ENCODE measurements at regions of chr16 and their contacts with region 1.

Region 1: DNA sequence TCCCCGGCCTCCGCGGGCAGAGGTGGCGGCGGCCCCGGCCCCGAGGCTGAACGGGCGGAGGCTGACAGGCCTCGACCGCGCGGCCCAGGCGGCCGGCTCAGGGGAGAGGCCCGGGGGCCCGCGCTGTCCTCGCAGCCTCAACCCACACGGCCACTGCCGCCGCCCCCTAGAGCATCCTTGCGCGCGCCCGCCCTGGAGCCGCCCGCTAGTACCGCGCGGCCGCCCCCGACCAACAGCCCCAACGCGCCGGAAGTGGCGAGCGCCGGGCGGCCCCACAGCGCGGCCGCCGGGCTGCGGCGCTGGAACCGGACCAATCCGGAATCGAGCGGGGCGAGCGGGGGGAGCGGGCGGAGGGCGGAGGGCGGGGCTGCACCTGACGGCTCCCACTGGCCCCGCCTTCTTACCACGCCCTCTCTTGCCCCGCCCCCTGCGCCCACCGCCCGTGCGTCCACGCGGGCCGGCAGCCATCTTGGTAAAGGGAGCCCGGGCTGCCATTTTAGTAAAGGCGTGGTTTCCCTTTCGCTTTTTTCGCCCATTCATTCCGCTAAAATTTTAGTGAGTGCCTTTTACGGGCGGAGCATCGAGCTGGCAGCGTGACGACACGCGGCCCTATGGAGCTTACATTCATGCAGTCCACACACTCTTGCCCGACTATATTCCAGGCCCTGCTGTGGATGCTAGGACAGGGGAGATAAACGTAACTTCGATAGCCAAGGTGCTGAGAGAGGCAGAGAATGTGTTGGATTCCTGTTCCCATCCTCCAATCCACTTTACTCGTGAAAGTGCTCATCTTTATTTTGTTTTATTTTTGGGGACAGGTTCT is at the start of gene XPO6:
- DNase-seq: peak; percentile 95 to 100 (median 98)
- ATAC-seq: peak; percentile 97
- H3K4me3 ChIP-seq: peak within 1 kb of the TSS; percentile 72
- H3K4me3 Mint-ChIP-seq: peak within 1 kb of the TSS; percentile 65 to 98 (median 93)
- H3K27ac ChIP-seq: peak within 1 kb of the TSS; percentile 85
- H3K27ac Mint-ChIP-seq: peak within 1 kb of the TSS; percentile 80 to 98 (median 94)
- H3K4me1 ChIP-seq: peaks cover 19 to 21% of the 10 kb centered on the region in 2 donors
- H3K4me1 Mint-ChIP-seq: peaks cover 8 to 39% (median 32%) of the 10 kb centered on the region in 7 donors
- H3K27me3 ChIP-seq: no peaks in the 10 kb centered on the region
- H3K27me3 Mint-ChIP-seq: no peaks in the 10 kb centered on the region
- total RNA-seq, gene XPO6: 232 to 437 (median 385) TPM

Region 2: GRCh38 chr16:27520982-27521673 is 690.8 kb before region 1 on chr16:
- CTCF ChIA-PET with region 1: no interaction called
- POLR2A ChIA-PET with region 1: no interaction called
- intact Hi-C with region 1: no loop called
- DNase-seq: no peak
- ATAC-seq: no peak
- H3K4me3 ChIP-seq: no peak overlapping the region
- H3K4me3 Mint-ChIP-seq: no peak overlapping the region
- H3K27ac ChIP-seq: no peak overlapping the region
- H3K27ac Mint-ChIP-seq: peak overlapping the region in 1 of 9 donors; percentile 77
- H3K4me1 ChIP-seq: no peaks in the 10 kb centered on the region
- H3K4me1 Mint-ChIP-seq: peaks cover 0 to 4% (median 0%) of the 10 kb centered on the region in 7 donors
- H3K27me3 ChIP-seq: no peaks in the 10 kb centered on the region
- H3K27me3 Mint-ChIP-seq: no peaks in the 10 kb centered on the region

Region 3: GRCh38 chr16:28131743-28132393 is 80.1 kb before region 1 on chr16:
- CTCF ChIA-PET with region 1: interaction called, 168 read pairs
- POLR2A ChIA-PET with region 1: interaction called, 45 read pairs
- intact Hi-C with region 1: loop called in 1 of 2 experiments (anchors 1 kb)
- DNase-seq: no peak
- ATAC-seq: no peak
- H3K4me3 ChIP-seq: no peak overlapping the region
- H3K4me3 Mint-ChIP-seq: no peak overlapping the region
- H3K27ac ChIP-seq: no peak overlapping the region
- H3K27ac Mint-ChIP-seq: peak overlapping the region in 5 of 9 donors; percentile 31 to 86 (median 68)
- H3K4me1 ChIP-seq: peaks cover 6 to 13% of the 10 kb centered on the region in 2 donors
- H3K4me1 Mint-ChIP-seq: peaks cover 16 to 49% (median 36%) of the 10 kb centered on the region in 7 donors
- H3K27me3 ChIP-seq: no peaks in the 10 kb centered on the region
- H3K27me3 Mint-ChIP-seq: no peaks in the 10 kb centered on the region

Region 4: DNA sequence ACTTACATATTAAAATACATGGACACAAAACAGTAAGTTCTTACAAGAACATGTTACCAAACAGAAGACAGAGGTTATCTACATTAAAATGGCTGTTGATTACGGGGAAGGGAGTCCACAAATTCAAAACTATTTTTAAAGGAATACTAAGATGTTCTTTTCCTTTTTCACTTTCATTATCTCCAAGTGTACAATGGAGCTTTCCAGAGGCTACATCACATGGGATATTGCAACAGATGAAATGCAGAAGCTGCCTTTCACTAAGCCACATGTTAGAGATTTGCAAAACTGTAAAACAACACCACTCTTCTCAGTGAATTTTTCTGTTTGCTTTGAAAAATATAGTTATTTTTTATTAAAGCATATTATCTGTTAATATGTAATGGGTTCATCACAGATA is 53.8 kb before region 1 on chr16:
- CTCF ChIA-PET with region 1: interaction called, 10 read pairs
- POLR2A ChIA-PET with region 1: interaction called, 13 read pairs
- intact Hi-C with region 1: no loop called
- DNase-seq: no peak
- ATAC-seq: peak; percentile 57
- H3K4me3 ChIP-seq: no peak overlapping the region
- H3K4me3 Mint-ChIP-seq: peak overlapping the region in 2 of 10 donors; percentile 27 to 48
- H3K27ac ChIP-seq: no peak overlapping the region
- H3K27ac Mint-ChIP-seq: peak overlapping the region in 8 of 9 donors; percentile 56 to 88 (median 65)
- H3K4me1 ChIP-seq: peaks cover 0 to 41% of the 10 kb centered on the region in 2 donors
- H3K4me1 Mint-ChIP-seq: peaks cover 54 to 94% (median 83%) of the 10 kb centered on the region in 7 donors
- H3K27me3 ChIP-seq: no peaks in the 10 kb centered on the region
- H3K27me3 Mint-ChIP-seq: no peaks in the 10 kb centered on the region

Region 5: DNA sequence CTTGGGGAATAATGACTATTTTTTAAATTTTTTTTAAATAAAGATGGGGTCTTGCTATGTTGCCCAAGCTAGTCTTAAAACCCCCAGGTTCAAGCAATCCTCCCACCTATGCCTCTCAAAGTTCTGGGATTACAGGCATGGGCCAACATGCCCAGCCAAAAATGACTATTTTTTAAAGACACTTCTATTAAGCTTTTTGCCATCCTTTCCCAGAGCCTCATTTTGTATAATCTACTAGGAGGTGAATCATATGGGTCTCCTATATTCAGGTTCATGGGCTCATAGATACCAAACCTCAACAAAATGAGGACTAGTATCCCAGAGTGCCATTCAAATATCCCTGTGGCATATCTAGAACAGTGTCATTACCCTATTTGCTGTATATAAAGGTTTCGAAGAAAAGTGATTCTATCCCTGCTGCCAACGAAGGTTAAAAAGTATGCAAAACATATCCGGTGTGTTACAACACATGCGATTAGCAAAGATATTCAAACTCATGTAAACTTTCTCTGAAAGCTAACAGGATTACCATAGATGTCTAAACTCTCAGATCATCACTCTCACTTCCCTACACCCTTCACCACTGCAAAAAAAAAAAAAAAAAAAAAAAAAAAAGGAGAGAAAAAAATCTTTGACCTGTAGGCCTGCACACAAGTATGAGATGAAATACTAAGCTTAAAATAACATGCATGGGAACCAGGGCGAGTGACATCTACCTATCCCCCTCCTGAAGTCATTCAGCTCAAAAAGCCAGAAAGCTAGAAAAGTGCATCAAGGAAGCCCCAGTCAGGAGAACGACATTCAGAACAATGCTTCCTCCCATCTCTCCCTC is 23.6 kb before region 1 on chr16:
- CTCF ChIA-PET with region 1: interaction called, 18 read pairs
- POLR2A ChIA-PET with region 1: interaction called, 53 read pairs
- intact Hi-C with region 1: loop called (anchors 1 kb)
- DNase-seq: no peak
- ATAC-seq: peak; percentile 10
- H3K4me3 ChIP-seq: peak overlapping the region; percentile 30
- H3K4me3 Mint-ChIP-seq: peak overlapping the region; percentile 64 to 81 (median 73)
- H3K27ac ChIP-seq: peak overlapping the region; percentile 66
- H3K27ac Mint-ChIP-seq: peak overlapping the region; percentile 75 to 95 (median 90)
- H3K4me1 ChIP-seq: peaks cover 64 to 79% of the 10 kb centered on the region in 2 donors
- H3K4me1 Mint-ChIP-seq: peaks cover 74 to 97% (median 91%) of the 10 kb centered on the region in 7 donors
- H3K27me3 ChIP-seq: no peaks in the 10 kb centered on the region
- H3K27me3 Mint-ChIP-seq: no peaks in the 10 kb centered on the region

Region 6: GRCh38 chr16:28291873-28292660 is 80.1 kb after region 1 on chr16 and contains the start of gene SBK1:
- CTCF ChIA-PET with region 1: no interaction called
- POLR2A ChIA-PET with region 1: no interaction called
- intact Hi-C with region 1: loop called in 1 of 2 experiments (anchors 1 kb)
- DNase-seq: peak; percentile 75 to 90 (median 87)
- ATAC-seq: peak; percentile 97
- H3K4me3 ChIP-seq: peak within 1 kb of the TSS; percentile 94
- H3K4me3 Mint-ChIP-seq: peak within 1 kb of the TSS; percentile 93 to 97 (median 96)
- H3K27ac ChIP-seq: peak within 1 kb of the TSS; percentile 87
- H3K27ac Mint-ChIP-seq: peak within 1 kb of the TSS; percentile 78 to 96 (median 88)
- H3K4me1 ChIP-seq: peaks cover 49 to 59% of the 10 kb centered on the region in 2 donors
- H3K4me1 Mint-ChIP-seq: peaks cover 49 to 76% (median 69%) of the 10 kb centered on the region in 7 donors
- H3K27me3 ChIP-seq: no peaks in the 10 kb centered on the region
- H3K27me3 Mint-ChIP-seq: peaks cover 0 to 27% (median 0%) of the 10 kb centered on the region in 5 donors
- total RNA-seq, gene SBK1: 6.0 to 19.9 (median 17.9) TPM

Region 7: DNA sequence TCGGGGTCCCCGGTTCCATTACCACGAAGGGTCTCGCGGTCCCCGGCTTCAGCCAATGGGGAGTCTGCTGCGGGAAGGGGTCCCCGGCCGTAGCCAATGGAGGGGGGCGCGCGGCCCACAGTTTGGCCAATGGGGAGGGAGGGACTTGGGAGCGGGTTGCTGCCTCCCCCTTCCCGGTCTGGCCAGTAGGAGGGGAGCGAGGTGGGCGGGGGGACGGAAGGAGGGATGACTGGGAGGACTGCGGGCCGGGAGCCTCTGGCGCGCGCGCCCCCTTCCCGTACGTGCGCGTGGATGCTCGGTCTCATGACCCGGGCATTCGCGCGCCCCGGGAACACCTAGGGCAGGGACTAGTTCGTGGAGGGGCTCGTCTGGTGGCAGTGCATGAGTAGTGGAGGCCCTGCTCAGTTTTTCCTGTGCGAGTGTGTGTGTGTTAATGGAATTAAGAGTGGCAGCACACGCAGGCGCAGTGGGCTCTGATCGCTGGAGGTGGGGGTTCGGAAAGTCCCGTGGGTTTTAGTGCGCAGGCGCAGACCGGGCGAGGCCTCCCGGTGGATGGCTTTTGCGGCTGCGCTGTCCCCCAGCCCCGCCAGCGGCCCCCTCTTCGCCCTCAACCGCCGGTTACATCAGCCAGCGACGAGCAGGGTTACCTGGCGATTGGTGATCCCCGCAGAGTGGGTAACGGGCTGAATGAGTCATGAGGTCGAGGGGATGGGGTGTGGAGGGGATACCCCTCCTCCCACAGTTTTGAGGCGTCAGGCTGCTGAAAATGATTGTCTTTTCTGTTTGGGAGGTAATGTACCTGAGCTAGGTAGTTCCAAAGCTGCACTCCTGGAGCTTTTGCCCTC is 612.2 kb after region 1 on chr16:
- CTCF ChIA-PET with region 1: no interaction called
- POLR2A ChIA-PET with region 1: no interaction called
- intact Hi-C with region 1: loop called in 1 of 2 experiments (anchors 5 kb)
- DNase-seq: peak; percentile 92 to 97 (median 94)
- ATAC-seq: peak; percentile 82
- H3K4me3 ChIP-seq: peak overlapping the region; percentile 79
- H3K4me3 Mint-ChIP-seq: peak overlapping the region; percentile 92 to 99 (median 97)
- H3K27ac ChIP-seq: peak overlapping the region; percentile 94
- H3K27ac Mint-ChIP-seq: peak overlapping the region; percentile 96 to 100 (median 99)
- H3K4me1 ChIP-seq: peaks cover 19 to 20% of the 10 kb centered on the region in 2 donors
- H3K4me1 Mint-ChIP-seq: peaks cover 14 to 55% (median 52%) of the 10 kb centered on the region in 7 donors
- H3K27me3 ChIP-seq: no peaks in the 10 kb centered on the region
- H3K27me3 Mint-ChIP-seq: peaks cover 0 to 4% (median 0%) of the 10 kb centered on the region in 5 donors